Heart left ventricle (tissue), 16 donors: ENCODE measurements at regions of chr2 and their contacts with region 1.

Region 1: GRCh38 chr2:43611987-43612894 is 16.4 kb upstream of the THADA start:
- DNase-seq: peak in 4 of 5 donors; percentile 55 to 67 (median 64)
- ATAC-seq: peak; percentile 79 to 93 (median 90)
- H3K4me3 ChIP-seq: no peak overlapping the region
- H3K27ac ChIP-seq: no peak overlapping the region
- H3K4me1 ChIP-seq: peaks cover 0 to 2% (median 0%) of the 10 kb centered on the region in 12 donors
- H3K27me3 ChIP-seq: no peaks in the 10 kb centered on the region
- CTCF ChIP-seq: peak; percentile 71 to 86 (median 77)
- POLR2A ChIP-seq: no peak

Region 2: DNA sequence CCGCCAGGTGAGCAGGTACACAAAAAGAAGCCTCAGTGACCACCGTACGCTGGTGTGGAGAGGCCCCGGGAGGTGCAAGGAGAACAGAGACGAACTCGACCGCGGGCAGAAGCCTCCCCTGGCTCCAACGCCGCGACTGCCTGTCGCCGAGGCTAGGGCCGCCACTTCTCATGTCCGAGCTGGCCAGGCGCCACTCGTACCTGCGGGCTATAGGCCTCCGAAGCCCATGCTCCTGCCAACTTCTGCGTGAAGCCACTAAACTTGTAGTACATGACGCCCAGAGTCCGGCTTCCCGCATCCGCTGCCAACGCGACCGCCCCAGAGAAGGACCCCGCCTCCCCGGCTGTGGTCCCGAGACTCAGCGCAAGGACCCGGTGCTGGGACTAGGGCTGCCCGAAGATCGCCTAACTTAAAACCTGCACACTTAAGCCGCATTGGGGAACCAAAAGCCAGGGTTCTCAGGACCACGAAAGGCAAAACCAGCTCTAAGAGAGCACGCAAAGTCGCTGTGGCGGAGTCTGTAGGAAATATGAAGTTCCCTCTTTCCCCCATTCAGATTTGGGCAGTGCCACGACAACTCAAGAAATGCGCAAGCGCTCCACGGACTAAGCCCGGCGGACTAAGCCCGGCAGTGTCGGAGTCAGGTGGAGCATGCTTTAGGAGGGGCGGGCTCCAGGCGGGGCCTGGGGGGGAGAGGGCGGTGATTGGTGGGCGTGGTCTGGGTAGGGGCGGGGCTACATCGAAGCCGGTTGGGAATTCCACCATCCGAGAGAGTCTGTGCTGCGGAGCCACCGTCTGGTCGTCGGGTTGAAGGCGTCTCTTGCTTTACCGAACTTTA is 1251.1 kb before region 1 on chr2 and contains the start of gene COX7A2L:
- intact Hi-C with region 1: loop called in 1 of 10 experiments (anchors 10 kb)
- DNase-seq: peak; percentile 96 to 98 (median 98)
- ATAC-seq: peak; percentile 99 to 100 (median 99)
- H3K4me3 ChIP-seq: peak within 1 kb of the TSS; percentile 77 to 100 (median 94)
- H3K27ac ChIP-seq: peak within 1 kb of the TSS; percentile 90 to 100 (median 94)
- H3K4me1 ChIP-seq: peaks cover 0 to 36% (median 27%) of the 10 kb centered on the region in 12 donors
- H3K27me3 ChIP-seq: no peaks in the 10 kb centered on the region
- CTCF ChIP-seq: peak in 10 of 12 donors; percentile 9 to 57 (median 32)
- POLR2A ChIP-seq: peak in 1 of 2 donors; percentile 47
- total RNA-seq, gene COX7A2L: 87.0 to 138 (median 105) TPM

Region 3: GRCh38 chr2:43430453-43430852 is 181.8 kb before region 1 on chr2:
- intact Hi-C with region 1: no loop called
- DNase-seq: no peak
- ATAC-seq: peak; percentile 32 to 77 (median 72)
- H3K4me3 ChIP-seq: no peak overlapping the region
- H3K27ac ChIP-seq: no peak overlapping the region
- H3K4me1 ChIP-seq: peaks cover 0 to 27% (median 8%) of the 10 kb centered on the region in 12 donors
- H3K27me3 ChIP-seq: no peaks in the 10 kb centered on the region
- CTCF ChIP-seq: no peak
- POLR2A ChIP-seq: no peak

Region 4: GRCh38 chr2:43519643-43520221 is 92.5 kb before region 1 on chr2:
- intact Hi-C with region 1: no loop called
- DNase-seq: no peak
- ATAC-seq: peak; percentile 41 to 82 (median 68)
- H3K4me3 ChIP-seq: no peak overlapping the region
- H3K27ac ChIP-seq: peak overlapping the region; percentile 18 to 81 (median 56)
- H3K4me1 ChIP-seq: peaks cover 2 to 59% (median 40%) of the 10 kb centered on the region in 12 donors
- H3K27me3 ChIP-seq: no peaks in the 10 kb centered on the region
- CTCF ChIP-seq: no peak
- POLR2A ChIP-seq: no peak

Region 5: DNA sequence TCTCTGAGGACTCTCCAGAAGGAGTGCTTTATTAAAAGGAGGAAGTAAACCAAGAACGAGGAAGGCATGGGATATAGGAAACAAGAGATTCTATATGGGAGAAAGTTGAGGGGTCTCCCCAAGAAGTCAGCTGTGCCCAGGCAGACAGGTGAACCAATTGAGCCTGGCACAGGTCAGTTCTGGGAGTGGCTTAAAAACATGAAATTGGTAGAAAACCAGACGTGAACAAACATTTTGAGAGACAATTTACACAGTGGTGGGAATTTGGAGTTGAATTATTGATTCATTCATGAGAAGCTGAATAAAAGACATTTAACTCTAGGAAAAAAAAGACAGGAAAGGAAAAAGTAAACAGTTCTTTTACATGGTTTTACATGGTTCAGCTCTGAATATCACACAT is 41.3 kb after region 1 on chr2:
- intact Hi-C with region 1: no loop called
- DNase-seq: no peak
- ATAC-seq: no peak
- H3K4me3 ChIP-seq: no peak overlapping the region
- H3K27ac ChIP-seq: no peak overlapping the region
- H3K4me1 ChIP-seq: peaks cover 0 to 10% (median 0%) of the 10 kb centered on the region in 12 donors
- H3K27me3 ChIP-seq: peaks cover 0 to 6% (median 0%) of the 10 kb centered on the region in 9 donors
- CTCF ChIP-seq: no peak
- POLR2A ChIP-seq: no peak

Region 6: DNA sequence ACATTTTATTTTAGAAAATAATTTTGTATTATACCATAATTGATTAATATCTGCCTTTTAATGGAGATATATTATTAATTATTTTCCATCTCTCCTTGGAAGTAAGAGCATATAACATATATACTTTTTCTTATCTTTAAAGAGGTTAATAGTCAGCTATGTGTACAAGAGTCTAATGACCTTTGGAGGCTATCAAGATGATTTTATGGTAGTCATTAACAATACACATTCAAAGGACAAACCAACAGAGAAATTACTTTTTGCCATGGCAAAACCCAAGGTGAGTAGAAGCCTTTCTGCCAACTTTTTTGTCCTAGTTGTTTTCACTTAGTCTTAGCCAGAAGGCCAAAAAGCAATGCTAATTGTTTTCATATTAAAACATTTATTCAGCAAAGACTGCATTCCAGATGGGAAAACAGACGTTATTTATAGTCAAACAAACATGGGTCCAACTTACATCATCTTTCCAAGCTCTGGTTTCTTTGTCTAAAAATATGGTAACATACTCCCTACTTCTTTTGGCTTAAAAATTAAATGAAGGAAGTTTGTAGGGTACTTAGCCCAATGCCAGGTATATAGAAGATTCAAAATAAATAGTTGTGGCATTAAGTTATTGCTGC is 152.0 kb after region 1 on chr2:
- intact Hi-C with region 1: loop called in 1 of 10 experiments (anchors 10 kb)
- DNase-seq: no peak
- ATAC-seq: no peak
- H3K4me3 ChIP-seq: no peak overlapping the region
- H3K27ac ChIP-seq: no peak overlapping the region
- H3K4me1 ChIP-seq: peaks cover 0 to 5% (median 0%) of the 10 kb centered on the region in 12 donors
- H3K27me3 ChIP-seq: no peaks in the 10 kb centered on the region
- CTCF ChIP-seq: no peak
- POLR2A ChIP-seq: no peak

Region 7: DNA sequence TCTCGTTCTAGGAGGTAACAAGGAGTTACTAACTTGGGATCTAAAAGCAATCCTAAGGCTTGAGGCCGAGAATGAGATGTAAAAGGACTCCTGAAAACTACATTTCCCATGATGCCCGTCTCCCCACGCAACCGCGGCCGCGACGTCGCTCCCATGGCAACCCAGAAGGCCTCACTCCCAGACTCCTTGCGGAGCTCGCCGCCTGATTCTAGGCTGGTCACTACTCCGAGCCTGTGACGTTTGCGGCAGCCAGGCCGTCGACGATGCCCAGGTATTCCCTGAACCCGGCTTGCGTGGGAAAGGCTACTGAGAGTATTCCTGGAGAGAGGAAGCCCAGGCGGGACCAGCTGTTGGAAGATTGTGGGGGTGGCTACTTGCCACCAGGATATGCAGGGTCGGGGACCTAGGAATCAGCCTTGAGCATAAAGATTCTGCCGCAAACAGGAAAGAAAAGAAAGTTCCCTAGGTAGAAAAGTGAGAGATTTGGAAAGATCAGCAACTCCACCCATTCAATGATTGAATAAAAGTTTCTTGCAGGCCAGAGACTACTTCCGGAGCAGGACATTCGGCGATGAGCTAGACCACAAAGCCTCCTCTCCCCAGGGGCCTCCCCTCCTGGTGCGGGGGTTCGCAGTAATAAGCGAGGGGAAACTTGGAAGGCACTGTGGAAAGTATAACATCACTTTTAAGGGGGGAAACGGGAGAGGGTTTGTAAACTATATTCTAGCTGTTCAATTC is 161.8 kb after region 1 on chr2 and contains the start of gene DYNC2LI1:
- intact Hi-C with region 1: loop called in 2 of 10 experiments (anchors 10 kb)
- DNase-seq: peak; percentile 89 to 94 (median 92)
- ATAC-seq: peak; percentile 97 to 100 (median 99)
- H3K4me3 ChIP-seq: peak within 1 kb of the TSS; percentile 56 to 89 (median 72)
- H3K27ac ChIP-seq: peak within 1 kb of the TSS in 11 of 12 donors; percentile 53 to 88 (median 80)
- H3K4me1 ChIP-seq: peaks cover 0 to 14% (median 5%) of the 10 kb centered on the region in 12 donors
- H3K27me3 ChIP-seq: no peaks in the 10 kb centered on the region
- CTCF ChIP-seq: no peak
- POLR2A ChIP-seq: peak in 1 of 2 donors; percentile 38
- total RNA-seq, gene DYNC2LI1: 4.8 to 17.8 (median 9.6) TPM

Region 8: GRCh38 chr2:43877782-43878464 is 265.7 kb after region 1 on chr2:
- intact Hi-C with region 1: loop called in 2 of 10 experiments (anchors 10 kb)
- DNase-seq: peak in 1 of 5 donors; percentile 15
- ATAC-seq: peak; percentile 40 to 68 (median 60)
- H3K4me3 ChIP-seq: no peak overlapping the region
- H3K27ac ChIP-seq: no peak overlapping the region
- H3K4me1 ChIP-seq: peaks cover 0 to 4% (median 0%) of the 10 kb centered on the region in 12 donors
- H3K27me3 ChIP-seq: peaks cover 0 to 8% (median 0%) of the 10 kb centered on the region in 9 donors
- CTCF ChIP-seq: peak; percentile 67 to 86 (median 80)
- POLR2A ChIP-seq: no peak